ENCODE measurements at regions of chr5 and their contacts with region 1.

Region 1: GRCh38 chr5:139648205-139649081 is at the start of gene CXXC5:
- DNase-seq: peak; percentile 60 to 96 (median 90)

Region 2: GRCh38 chr5:139560752-139561654 is 87.4 kb before region 1 on chr5 and contains the start of gene UBE2D2:
- intact Hi-C with region 1: no loop called
- DNase-seq: peak; percentile 92 to 99 (median 96)

Region 3: GRCh38 chr5:139633295-139634027 is 15.0 kb before region 1 on chr5:
- intact Hi-C with region 1: loop called (anchors 2 kb)
- DNase-seq: peak; percentile 45 to 92 (median 80)

Region 4: GRCh38 chr5:139689631-139690063 is 41.2 kb after region 1 on chr5:
- intact Hi-C with region 1: loop called (anchors 5 kb)
- DNase-seq: no peak